ENCODE measurements at regions of chr22 and their contacts with region 1.

Region 1: GRCh38 chr22:17121227-17122195 is at the start of gene TMEM121B:
- DNase-seq: peak; percentile 59 to 90 (median 64)
- H3K4me3 ChIP-seq: peak within 1 kb of the TSS in 2 of 4 donors; percentile 19 to 64
- H3K27ac ChIP-seq: peak within 1 kb of the TSS in 1 of 5 donors; percentile 47
- H3K4me1 ChIP-seq: peaks cover 7 to 10% of the 10 kb centered on the region in 2 donors
- H3K27me3 ChIP-seq: peaks cover 6% of the 10 kb centered on the region
- CTCF ChIP-seq: no peak
- POLR2A ChIP-seq: no peak
- total RNA-seq, gene TMEM121B: 0.22 to 2.3 (median 1.4) TPM

Region 2: GRCh38 chr22:17164392-17165024 is 43.0 kb after region 1 on chr22:
- intact Hi-C with region 1: loop called in 1 of 2 experiments (anchors 5 kb)
- DNase-seq: no peak
- H3K4me3 ChIP-seq: no peak overlapping the region
- H3K27ac ChIP-seq: no peak overlapping the region
- H3K4me1 ChIP-seq: peaks cover 7 to 13% of the 10 kb centered on the region in 2 donors
- H3K27me3 ChIP-seq: no peaks in the 10 kb centered on the region
- CTCF ChIP-seq: no peak
- POLR2A ChIP-seq: no peak